Aorta (tissue), 5 donors: ENCODE measurements at regions of chr5 and their contacts with region 1.

Region 1: DNA sequence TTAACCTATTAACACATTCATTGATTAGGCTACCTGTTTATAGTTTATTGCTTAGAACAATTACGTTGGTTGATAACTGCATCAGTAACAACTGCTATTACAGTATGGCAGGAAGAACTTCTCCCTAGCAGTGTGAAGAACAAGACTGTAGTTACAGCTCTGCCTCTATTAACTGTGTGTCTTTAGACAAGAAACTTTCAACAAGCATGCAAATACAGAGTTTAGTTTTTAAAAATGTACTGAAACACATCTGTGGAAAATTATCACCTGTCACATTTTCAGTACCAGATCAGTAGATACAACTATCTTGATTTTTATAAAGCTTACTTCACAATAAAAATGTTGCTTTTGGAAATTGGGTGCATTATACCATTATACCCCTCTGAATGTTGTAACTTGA is 22.2 kb downstream of the ELL2 start:
- DNase-seq: no peak
- ATAC-seq: no peak
- H3K4me3 ChIP-seq: no peak overlapping the region
- H3K27ac ChIP-seq: no peak overlapping the region
- H3K4me1 ChIP-seq: peaks cover 0 to 10% of the 10 kb centered on the region in 2 donors
- H3K27me3 ChIP-seq: no peaks in the 10 kb centered on the region

Region 2: GRCh38 chr5:95900383-95900958 is 39.0 kb before region 1 on chr5:
- intact Hi-C with region 1: loop called in 1 of 2 experiments (anchors 5 kb)
- DNase-seq: no peak
- ATAC-seq: peak; percentile 66
- H3K4me3 ChIP-seq: no peak overlapping the region
- H3K27ac ChIP-seq: no peak overlapping the region
- H3K4me1 ChIP-seq: peaks cover 0 to 2% of the 10 kb centered on the region in 2 donors
- H3K27me3 ChIP-seq: no peaks in the 10 kb centered on the region